Calu3 (cell line): ENCODE measurements at regions of chr3 and their contacts with region 1.

Region 1: GRCh38 chr3:64825404-64826120 is 137.8 kb upstream of the ADAMTS9 start:
- DNase-seq: no peak
- H3K4me3 Mint-ChIP-seq: no peak overlapping the region
- H3K27ac Mint-ChIP-seq: no peak overlapping the region
- H3K4me1 Mint-ChIP-seq: peaks cover 14% of the 10 kb centered on the region
- H3K27me3 Mint-ChIP-seq: no peaks in the 10 kb centered on the region
- CTCF ChIP-seq: no peak

Region 2: DNA sequence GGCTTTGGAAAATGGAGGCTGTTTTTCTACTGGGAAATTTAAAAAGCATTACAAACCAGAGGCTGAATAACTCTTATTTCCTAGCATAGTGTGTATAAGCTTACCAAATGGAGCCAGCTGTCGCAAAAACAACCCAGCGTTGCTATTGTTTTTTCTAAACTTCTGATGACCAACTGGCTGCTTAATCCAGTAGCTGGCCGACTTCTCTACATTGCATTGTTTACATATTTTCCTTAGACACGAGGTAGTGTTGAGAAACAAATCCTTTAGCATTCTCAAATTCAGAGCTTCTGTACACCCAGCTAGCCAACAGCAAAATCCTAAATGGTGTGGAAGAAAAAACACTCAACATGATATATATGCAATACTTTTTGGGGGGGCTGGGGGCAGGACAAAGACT is 23.3 kb after region 1 on chr3:
- CTCF ChIA-PET with region 1: no interaction called
- intact Hi-C with region 1: loop called (anchors 2 kb)
- DNase-seq: no peak
- H3K4me3 Mint-ChIP-seq: no peak overlapping the region
- H3K27ac Mint-ChIP-seq: no peak overlapping the region
- H3K4me1 Mint-ChIP-seq: peaks cover 19% of the 10 kb centered on the region
- H3K27me3 Mint-ChIP-seq: no peaks in the 10 kb centered on the region
- CTCF ChIP-seq: no peak